ENCODE measurements at regions of chr1 and their contacts with region 1.

Region 1: GRCh38 chr1:25145775-25146393 is 86.4 kb downstream of the SYF2 start:
- DNase-seq: no peak

Region 2: DNA sequence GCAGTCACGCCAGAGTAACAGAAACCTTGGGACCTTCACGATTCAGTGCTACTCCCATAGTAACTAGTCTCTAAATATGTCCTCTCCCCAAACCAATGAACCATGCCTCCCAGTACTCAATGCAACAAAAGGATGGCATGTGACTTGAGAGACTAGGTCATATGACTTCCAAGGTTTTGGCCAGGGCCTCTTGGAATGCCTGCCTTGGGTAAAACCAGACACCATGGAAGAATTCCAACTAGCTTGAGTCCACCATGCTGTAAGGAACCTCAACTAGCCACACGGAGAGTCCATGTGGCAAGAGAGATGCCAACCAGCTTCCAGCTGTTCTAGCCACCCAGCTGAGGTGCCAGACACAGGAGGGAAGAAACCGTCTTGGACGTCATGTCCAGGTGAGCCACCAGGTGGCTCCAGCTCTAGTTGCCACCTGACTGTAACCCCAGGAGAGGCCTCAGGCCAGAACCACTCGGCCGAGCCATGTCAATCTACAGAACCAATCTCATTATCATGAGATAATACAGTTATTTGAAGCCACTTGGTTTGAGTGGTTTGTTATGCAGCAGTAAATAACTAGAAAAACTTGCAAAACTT is 28.6 kb before region 1 on chr1:
- intact Hi-C with region 1: loop called in 1 of 2 experiments (anchors 2 kb)
- DNase-seq: no peak

Measured in posterior vena cava (tissue), 2 donors.